PC-3 (cell line): ENCODE measurements at regions of chr4 and their contacts with region 1.

Region 1: DNA sequence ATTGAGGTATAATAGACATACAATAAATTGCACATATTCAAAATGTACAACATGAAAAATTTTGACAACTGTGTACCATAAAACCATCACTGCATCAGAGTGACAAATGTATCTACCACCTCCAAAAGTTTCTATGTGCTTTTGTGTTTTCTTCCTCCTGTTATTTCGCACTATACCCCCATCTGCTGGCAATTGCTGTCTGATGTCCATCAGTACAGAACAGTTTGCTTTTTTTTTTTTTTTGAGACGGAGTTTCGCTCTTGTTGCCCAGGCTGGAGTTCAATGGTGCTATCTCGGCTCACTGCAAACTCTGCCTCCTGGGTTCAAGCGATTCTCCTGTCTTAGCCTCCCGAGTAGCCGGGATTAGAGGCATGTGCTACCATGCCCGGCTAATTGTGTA is 154.3 kb upstream of the GIMD1 start:
- DNase-seq: peak; percentile 33
- ATAC-seq: peak; percentile 37; the same call in 1 of the 2 replicates
- H3K4me3 ChIP-seq: no peak overlapping the region
- H3K27ac ChIP-seq: no peak overlapping the region
- H3K4me1 ChIP-seq: no peaks in the 10 kb centered on the region
- H3K27me3 ChIP-seq: no peaks in the 10 kb centered on the region
- CTCF ChIP-seq: peak; percentile 44; the same call in 1 of the 2 replicates

Region 2: DNA sequence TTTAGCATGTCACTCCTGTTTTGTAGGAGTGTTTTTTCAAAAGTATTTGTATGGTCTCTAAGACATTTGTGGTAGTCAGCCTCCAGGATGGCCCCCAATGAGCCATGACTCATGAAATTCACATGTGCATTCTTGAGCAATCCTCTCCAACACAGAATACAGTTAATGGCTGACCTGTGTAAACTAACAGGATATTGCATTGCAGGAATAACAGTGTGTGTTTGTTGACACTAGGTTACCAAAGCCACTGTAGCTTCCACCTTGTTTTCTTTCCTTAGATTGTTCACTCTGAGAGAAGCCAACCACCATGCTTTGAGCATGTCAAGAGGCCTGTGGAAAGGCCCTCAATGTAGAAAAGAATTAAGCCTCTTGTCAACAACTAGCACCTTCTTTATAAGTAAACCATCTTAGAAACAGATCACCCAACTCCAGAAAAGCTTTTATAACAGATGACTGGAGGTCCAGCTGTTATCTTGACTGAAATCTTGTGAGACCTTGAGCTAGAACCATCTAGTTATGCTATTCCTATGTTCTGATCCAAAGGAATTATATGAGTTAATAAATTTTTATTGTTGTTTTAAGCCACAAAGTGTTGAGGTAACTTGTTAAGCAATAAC is 235.4 kb before region 1 on chr4:
- CTCF ChIA-PET with region 1: no interaction called
- POLR2A ChIA-PET with region 1: interaction called, 12 read pairs
- intact Hi-C with region 1: no loop called
- DNase-seq: peak; percentile 65
- ATAC-seq: peak; percentile 65
- H3K4me3 ChIP-seq: no peak overlapping the region
- H3K27ac ChIP-seq: peak overlapping the region; percentile 47
- H3K4me1 ChIP-seq: peaks cover 9% of the 10 kb centered on the region
- H3K27me3 ChIP-seq: no peaks in the 10 kb centered on the region
- CTCF ChIP-seq: no peak

Region 3: DNA sequence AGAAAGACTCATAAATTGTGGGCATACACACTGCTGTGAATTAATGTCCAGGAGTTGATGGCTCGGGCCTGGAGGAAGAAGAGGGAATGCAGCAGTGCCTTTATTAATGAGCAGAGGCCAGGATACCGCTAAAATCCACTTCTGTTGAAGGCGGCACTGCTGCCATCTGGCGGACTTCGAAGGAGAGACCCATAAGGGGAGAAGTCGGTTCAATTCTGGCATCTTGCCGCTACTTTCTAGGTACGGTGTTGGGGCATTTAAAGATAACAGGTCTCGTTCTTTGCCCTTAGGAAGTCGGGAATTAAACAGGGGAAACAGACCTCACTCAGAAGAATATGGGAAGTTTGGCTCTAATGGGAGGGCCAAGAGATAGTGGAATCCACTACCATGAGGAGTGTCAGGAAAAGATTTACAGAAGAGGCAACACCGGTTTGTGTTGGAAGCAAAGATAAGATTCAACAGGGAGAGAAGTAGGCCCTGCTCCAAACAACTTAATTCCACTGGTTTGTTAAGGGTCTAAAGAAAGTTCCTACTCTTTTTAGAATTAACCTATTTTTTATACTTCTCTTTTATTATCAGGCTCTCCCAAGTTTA is 20.6 kb before region 1 on chr4:
- CTCF ChIA-PET with region 1: no interaction called
- POLR2A ChIA-PET with region 1: no interaction called
- intact Hi-C with region 1: no loop called
- DNase-seq: peak; percentile 77
- ATAC-seq: peak; percentile 74
- H3K4me3 ChIP-seq: no peak overlapping the region
- H3K27ac ChIP-seq: no peak overlapping the region
- H3K4me1 ChIP-seq: no peaks in the 10 kb centered on the region
- H3K27me3 ChIP-seq: no peaks in the 10 kb centered on the region
- CTCF ChIP-seq: peak; percentile 80

Region 4: DNA sequence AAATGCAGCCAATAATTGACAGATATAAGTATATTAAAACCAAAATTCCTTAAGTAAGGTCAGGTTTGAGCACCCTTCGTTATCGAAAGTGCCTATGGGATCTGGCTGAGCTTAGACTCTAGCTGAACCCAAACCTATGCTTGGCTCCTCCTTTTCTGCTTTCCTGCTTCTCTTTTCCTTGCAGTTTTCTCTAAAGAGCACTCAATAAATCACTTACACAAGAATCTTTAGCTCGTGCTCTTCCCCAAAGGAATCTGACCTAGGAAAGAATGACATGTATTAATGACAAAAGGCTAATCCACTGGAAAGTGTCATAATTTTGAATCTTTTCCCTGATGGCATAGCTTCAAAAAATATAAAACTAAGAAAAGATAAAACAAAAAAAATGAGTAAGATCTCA is 230.6 kb after region 1 on chr4:
- CTCF ChIA-PET with region 1: interaction called, 10 read pairs
- POLR2A ChIA-PET with region 1: no interaction called
- intact Hi-C with region 1: no loop called
- DNase-seq: no peak
- ATAC-seq: no peak
- H3K4me3 ChIP-seq: no peak overlapping the region
- H3K27ac ChIP-seq: no peak overlapping the region
- H3K4me1 ChIP-seq: no peaks in the 10 kb centered on the region
- H3K27me3 ChIP-seq: no peaks in the 10 kb centered on the region
- CTCF ChIP-seq: no peak